ENCODE measurements at regions of chr16 and their contacts with region 1.

Region 1: DNA sequence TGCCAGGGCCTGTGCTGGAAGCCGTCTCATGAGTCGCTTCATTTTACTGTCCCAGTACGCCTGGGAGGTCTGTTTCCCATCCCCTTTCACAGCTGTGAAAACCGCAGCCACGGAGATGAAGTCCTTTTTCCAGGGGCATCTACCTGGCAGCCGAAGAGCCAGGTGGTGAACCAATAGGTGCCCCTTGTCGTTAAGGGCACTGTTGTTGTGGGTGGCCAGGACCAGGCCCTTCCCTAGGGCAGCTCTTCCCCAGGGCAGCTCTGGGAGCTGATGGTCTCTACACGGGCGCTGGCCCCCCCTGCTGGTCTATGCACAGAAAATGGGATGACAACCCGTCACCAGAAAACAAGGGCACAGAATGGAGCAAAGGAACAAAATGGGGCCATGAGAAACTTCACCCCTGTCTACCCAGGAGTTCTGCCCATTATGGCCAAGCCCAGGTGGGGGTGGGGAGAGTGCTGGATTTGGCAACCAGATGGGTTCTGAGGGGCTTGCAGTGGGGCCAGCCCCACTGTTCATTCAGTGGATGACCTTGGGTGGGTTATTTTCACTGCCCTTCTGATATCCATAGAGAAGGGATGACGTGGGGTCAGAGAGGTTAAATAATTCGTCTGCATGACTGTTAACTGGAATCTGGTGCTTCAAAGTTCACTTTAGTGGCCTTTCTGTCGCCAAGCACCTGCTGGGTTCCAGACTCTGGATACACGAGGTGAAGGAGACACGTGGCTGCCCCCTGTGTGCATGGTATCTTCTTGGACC is 11.5 kb downstream of the RMI2 start:
- DNase-seq: peak; percentile 73
- H3K4me3 Mint-ChIP-seq: peak overlapping the region; percentile 13
- H3K27ac Mint-ChIP-seq: peak overlapping the region; percentile 18
- H3K4me1 Mint-ChIP-seq: peaks cover 58% of the 10 kb centered on the region
- H3K27me3 Mint-ChIP-seq: peaks cover 28% of the 10 kb centered on the region

Region 2: GRCh38 chr16:10918294-10919002 is 438.3 kb before region 1 on chr16:
- CTCF ChIA-PET with region 1: no interaction called
- POLR2A ChIA-PET with region 1: no interaction called
- intact Hi-C with region 1: no loop called
- DNase-seq: peak; percentile 92
- H3K4me3 Mint-ChIP-seq: no peak overlapping the region
- H3K27ac Mint-ChIP-seq: no peak overlapping the region
- H3K4me1 Mint-ChIP-seq: peaks cover 15% of the 10 kb centered on the region
- H3K27me3 Mint-ChIP-seq: no peaks in the 10 kb centered on the region

Region 3: GRCh38 chr16:10971560-10971961 is 385.2 kb before region 1 on chr16:
- CTCF ChIA-PET with region 1: interaction called, 45 read pairs
- POLR2A ChIA-PET with region 1: no interaction called
- intact Hi-C with region 1: no loop called
- DNase-seq: peak; percentile 36
- H3K4me3 Mint-ChIP-seq: no peak overlapping the region
- H3K27ac Mint-ChIP-seq: no peak overlapping the region
- H3K4me1 Mint-ChIP-seq: peaks cover 49% of the 10 kb centered on the region
- H3K27me3 Mint-ChIP-seq: no peaks in the 10 kb centered on the region

Region 4: GRCh38 chr16:11094072-11094856 is 262.5 kb before region 1 on chr16:
- CTCF ChIA-PET with region 1: interaction called, 4 read pairs
- POLR2A ChIA-PET with region 1: no interaction called
- intact Hi-C with region 1: loop called (anchors 2 kb)
- DNase-seq: peak; percentile 87
- H3K4me3 Mint-ChIP-seq: peak overlapping the region; percentile 49
- H3K27ac Mint-ChIP-seq: peak overlapping the region; percentile 98
- H3K4me1 Mint-ChIP-seq: peaks cover 82% of the 10 kb centered on the region
- H3K27me3 Mint-ChIP-seq: no peaks in the 10 kb centered on the region

Region 5: GRCh38 chr16:11155284-11155806 is 201.4 kb before region 1 on chr16:
- CTCF ChIA-PET with region 1: no interaction called
- POLR2A ChIA-PET with region 1: no interaction called
- intact Hi-C with region 1: no loop called
- DNase-seq: peak; percentile 45
- H3K4me3 Mint-ChIP-seq: no peak overlapping the region
- H3K27ac Mint-ChIP-seq: peak overlapping the region; percentile 28
- H3K4me1 Mint-ChIP-seq: peaks cover 30% of the 10 kb centered on the region
- H3K27me3 Mint-ChIP-seq: no peaks in the 10 kb centered on the region

Region 6: GRCh38 chr16:11263737-11264136 is 93.0 kb before region 1 on chr16:
- CTCF ChIA-PET with region 1: interaction called, 59 read pairs
- POLR2A ChIA-PET with region 1: interaction called, 47 read pairs
- intact Hi-C with region 1: loop called (anchors 2 kb)
- DNase-seq: peak; percentile 83
- H3K4me3 Mint-ChIP-seq: peak overlapping the region; percentile 24
- H3K27ac Mint-ChIP-seq: peak overlapping the region; percentile 86
- H3K4me1 Mint-ChIP-seq: peaks cover 32% of the 10 kb centered on the region
- H3K27me3 Mint-ChIP-seq: no peaks in the 10 kb centered on the region

Region 7: DNA sequence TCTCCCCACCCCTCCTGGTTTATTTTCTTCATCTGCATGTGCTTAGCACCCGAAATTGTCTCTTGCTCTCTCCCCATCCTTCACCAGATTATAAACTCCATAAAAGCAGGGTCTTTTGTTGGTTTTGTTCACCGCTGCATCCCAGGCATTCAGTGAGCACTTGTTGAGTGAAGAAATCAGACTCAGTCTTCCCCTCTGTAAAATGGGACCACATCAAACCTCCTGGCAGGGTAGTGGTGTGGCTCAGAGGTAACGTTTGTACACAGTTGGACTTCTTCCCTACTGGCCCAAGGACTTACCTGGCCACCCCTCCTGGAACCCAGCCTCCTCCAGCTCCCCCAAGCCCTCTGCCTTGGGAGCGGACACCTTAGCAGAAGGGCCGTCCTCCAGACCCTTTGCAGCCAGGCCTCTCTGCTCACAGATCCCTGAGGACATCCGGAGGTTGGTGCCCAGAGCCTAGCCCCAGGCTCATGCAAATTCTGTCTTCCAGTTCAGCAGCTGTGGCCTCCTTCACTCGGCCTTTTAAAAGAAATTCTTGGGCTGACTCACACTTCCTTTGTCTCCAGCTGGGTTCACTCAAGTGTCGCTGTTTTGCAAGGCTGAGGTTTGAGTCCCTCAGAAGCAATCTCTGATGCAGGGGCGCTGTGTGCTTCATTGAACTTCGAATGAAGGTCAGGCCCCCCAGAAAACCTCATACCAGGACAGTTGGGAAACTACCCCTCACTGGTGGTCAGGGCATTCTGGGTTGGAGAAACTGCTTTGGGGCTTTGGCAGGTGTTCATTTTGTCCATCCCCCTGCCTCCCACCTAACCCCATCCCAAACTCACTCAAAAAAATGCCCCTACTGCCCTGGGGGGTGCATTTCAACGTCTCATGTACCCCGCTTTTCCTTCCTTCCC is 28.3 kb before region 1 on chr16:
- CTCF ChIA-PET with region 1: interaction called, 4 read pairs
- POLR2A ChIA-PET with region 1: no interaction called
- intact Hi-C with region 1: loop called (anchors 2 kb)
- DNase-seq: peak; percentile 74
- H3K4me3 Mint-ChIP-seq: peak overlapping the region; percentile 36
- H3K27ac Mint-ChIP-seq: peak overlapping the region; percentile 53
- H3K4me1 Mint-ChIP-seq: peaks cover 52% of the 10 kb centered on the region
- H3K27me3 Mint-ChIP-seq: no peaks in the 10 kb centered on the region

Region 8: GRCh38 chr16:11370084-11370931 is 13.6 kb after region 1 on chr16:
- CTCF ChIA-PET with region 1: interaction called, 23 read pairs
- POLR2A ChIA-PET with region 1: interaction called, 4 read pairs
- intact Hi-C with region 1: no loop called
- DNase-seq: peak; percentile 38
- H3K4me3 Mint-ChIP-seq: no peak overlapping the region
- H3K27ac Mint-ChIP-seq: no peak overlapping the region
- H3K4me1 Mint-ChIP-seq: peaks cover 11% of the 10 kb centered on the region
- H3K27me3 Mint-ChIP-seq: no peaks in the 10 kb centered on the region

Region 9: DNA sequence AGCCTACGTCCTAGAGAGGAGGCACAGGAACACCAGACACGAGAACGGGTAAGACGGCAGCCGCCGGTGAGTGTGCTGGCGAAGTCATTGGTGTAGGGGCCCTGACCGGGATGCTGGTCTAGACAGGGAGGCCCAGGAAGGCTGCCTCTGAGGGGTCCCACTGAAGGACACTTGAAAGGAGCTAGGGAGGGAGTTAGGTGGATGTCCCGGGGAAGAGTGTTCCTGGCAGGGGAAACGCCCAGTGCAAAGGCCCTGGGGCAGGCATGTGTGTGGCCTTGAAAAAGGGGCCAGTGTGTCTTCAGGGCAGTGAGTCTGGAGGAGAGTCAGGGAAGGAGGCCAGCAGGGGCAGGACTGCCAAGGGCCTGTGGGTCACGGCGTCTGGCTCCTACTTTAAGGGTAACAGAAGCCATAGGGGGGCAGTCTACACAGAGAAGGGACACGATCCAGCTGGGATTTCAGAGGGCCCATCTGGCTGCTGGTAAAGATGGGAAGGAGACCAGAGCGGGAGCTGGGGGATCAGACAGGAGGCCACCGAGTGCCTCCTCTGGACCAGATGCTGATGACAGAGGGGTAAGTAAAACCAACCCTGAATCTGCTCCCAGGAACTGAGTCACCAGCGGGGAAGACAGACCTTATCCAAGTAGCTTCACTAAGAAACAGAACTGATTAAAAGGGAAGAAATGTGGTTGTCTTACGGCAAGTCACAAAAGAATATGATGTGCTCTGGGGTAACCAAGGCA is 114.1 kb after region 1 on chr16:
- CTCF ChIA-PET with region 1: no interaction called
- POLR2A ChIA-PET with region 1: no interaction called
- intact Hi-C with region 1: no loop called
- DNase-seq: no peak
- H3K4me3 Mint-ChIP-seq: no peak overlapping the region
- H3K27ac Mint-ChIP-seq: no peak overlapping the region
- H3K4me1 Mint-ChIP-seq: no peaks in the 10 kb centered on the region
- H3K27me3 Mint-ChIP-seq: no peaks in the 10 kb centered on the region

Region 10: GRCh38 chr16:11484691-11485258 is 128.0 kb after region 1 on chr16:
- CTCF ChIA-PET with region 1: no interaction called
- POLR2A ChIA-PET with region 1: no interaction called
- intact Hi-C with region 1: no loop called
- DNase-seq: no peak
- H3K4me3 Mint-ChIP-seq: no peak overlapping the region
- H3K27ac Mint-ChIP-seq: no peak overlapping the region
- H3K4me1 Mint-ChIP-seq: no peaks in the 10 kb centered on the region
- H3K27me3 Mint-ChIP-seq: no peaks in the 10 kb centered on the region